GM12878 (cell line): ENCODE measurements at regions of chr11 and their contacts with region 1.

Region 1: DNA sequence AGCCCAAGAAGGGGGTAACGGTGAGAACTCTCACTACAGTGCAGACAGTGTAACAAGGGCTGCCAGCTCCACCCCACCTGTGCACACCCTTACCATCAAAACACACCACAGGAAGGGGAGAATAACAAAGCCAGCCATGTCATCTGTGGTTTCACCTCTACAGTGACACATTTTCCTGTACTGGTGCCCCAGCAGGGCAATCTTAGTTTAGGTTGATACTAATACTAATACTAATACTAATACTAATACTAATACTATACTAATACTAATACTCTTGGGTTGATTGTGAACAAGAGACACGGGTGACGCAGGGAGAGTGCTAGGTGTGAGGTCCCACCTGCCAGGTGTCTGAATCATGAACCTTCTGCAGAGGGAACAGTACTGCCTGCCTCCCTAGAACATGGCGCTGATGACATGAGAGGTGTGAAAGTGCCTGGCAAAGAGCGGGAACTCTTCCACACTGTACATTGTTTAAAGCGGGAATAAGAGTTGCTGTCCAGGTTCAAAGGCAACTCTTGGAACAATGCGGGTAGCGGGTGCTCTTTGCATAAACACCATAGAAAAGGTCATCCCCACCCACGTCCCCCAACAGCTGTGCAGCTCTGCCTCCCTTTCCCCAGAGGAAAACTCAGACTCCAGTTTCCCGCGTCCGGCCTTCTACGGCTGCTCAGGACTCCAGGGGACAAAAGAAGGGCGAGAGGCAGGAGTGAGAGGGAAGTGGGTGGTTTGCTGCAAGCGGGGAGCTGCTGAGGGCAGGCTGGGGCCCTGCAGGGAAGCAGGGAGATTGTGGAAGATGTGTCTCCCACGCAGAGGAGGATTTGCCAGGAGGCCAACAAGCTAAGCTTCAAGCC is 25.0 kb upstream of the TMPRSS4 start:
- DNase-seq: peak; percentile 23
- ATAC-seq: peak; percentile 81
- H3K4me3 ChIP-seq: no peak overlapping the region
- H3K27ac ChIP-seq: no peak overlapping the region
- H3K4me1 ChIP-seq: peaks cover 18% of the 10 kb centered on the region
- H3K27me3 ChIP-seq: no peaks in the 10 kb centered on the region
- CTCF ChIP-seq: no peak
- EP300 ChIP-seq: peak; percentile 14 to 42; a peak in 2 of 4 replicates
- POLR2A ChIP-seq: no peak
- RAD21 ChIP-seq: no peak

Region 2: DNA sequence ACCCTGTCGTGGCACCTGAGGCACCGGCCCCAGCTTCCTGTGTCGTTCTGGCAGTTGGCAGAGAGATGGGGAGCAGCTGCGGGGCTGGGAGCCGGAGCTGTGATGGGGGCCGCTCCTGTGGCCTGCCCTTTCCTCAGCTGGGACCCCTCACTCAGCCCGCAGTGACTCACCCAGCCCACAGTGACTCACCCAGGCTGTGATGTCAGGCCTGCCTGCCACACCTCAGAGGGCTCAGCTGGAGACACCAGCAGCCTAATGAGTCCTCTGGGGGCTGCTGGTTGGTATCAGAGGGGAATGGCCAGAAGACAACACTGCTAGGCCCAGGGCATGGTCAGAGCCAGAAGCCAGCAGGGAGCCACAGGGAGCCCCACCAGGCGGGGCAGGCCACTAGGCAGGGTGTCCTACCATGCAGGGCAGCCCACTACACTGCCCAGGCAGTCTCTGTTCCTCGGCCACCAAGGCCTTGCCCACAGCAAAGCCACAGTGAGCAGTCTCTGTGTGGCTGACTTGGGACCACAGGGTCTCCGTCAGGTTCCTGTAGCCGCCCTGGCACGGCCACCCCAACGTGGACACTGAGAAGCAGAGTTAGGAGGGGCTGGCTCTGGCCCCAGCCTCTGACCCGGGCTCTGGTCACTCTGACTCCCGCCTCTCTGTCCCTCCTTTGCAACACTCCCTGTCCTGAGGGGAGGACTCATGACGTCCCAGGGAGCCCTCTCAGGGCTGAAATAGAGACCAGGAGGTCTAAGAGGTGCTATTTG is 223.0 kb before region 1 on chr11:
- CTCF ChIA-PET with region 1: interaction called, 257 read pairs
- POLR2A ChIA-PET with region 1: interaction called, 3 read pairs
- RAD21 ChIA-PET with region 1: interaction called, 183 read pairs
- SMC1A ChIA-PET with region 1: interaction called, 98 read pairs
- in situ Hi-C with region 1: no loop called
- intact Hi-C with region 1: loop called (anchors 1 kb)
- DNase-seq: no peak
- ATAC-seq: peak; percentile 92
- H3K4me3 ChIP-seq: no peak overlapping the region
- H3K27ac ChIP-seq: no peak overlapping the region; the same call in 1 of the 2 replicates
- H3K4me1 ChIP-seq: peaks cover 14% of the 10 kb centered on the region
- H3K27me3 ChIP-seq: no peaks in the 10 kb centered on the region
- CTCF ChIP-seq: no peak
- EP300 ChIP-seq: peak; percentile 34 to 54; a peak in 2 of 4 replicates
- POLR2A ChIP-seq: 0 out of 2 replicates have a peak, but pooled peaks have one; percentile 19
- RAD21 ChIP-seq: no peak

Region 3: DNA sequence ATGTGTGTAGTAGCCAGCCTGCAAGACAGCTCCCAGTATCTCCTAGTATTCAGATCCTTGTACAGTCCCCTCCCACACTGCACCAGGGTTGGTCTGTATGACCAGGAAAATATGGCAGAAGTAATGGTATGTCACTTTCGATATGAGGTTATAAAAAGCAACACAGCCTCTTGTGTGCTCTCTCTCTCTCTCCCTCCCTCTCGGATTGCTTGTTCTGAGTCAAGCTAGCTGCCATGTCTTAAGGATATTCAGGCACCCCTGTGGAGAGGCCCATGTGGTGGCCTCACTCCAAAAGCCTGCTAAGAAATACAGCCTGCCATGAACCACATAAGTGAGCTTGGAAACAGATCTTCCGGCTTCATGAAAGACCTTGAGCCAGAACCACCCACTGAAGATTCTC is 200.7 kb before region 1 on chr11:
- CTCF ChIA-PET with region 1: interaction called, 21 read pairs
- POLR2A ChIA-PET with region 1: no interaction called
- RAD21 ChIA-PET with region 1: interaction called, 93 read pairs
- SMC1A ChIA-PET with region 1: interaction called, 95 read pairs
- in situ Hi-C with region 1: no loop called
- intact Hi-C with region 1: no loop called
- DNase-seq: no peak
- ATAC-seq: peak; percentile 14; the same call in 2 of the 3 replicates
- H3K4me3 ChIP-seq: no peak overlapping the region
- H3K27ac ChIP-seq: no peak overlapping the region
- H3K4me1 ChIP-seq: no peaks in the 10 kb centered on the region
- H3K27me3 ChIP-seq: no peaks in the 10 kb centered on the region; a peak in 2 of 4 replicates
- CTCF ChIP-seq: no peak
- EP300 ChIP-seq: no peak
- POLR2A ChIP-seq: no peak
- RAD21 ChIP-seq: no peak

Region 4: GRCh38 chr11:117941163-117941707 is 110.6 kb before region 1 on chr11:
- CTCF ChIA-PET with region 1: interaction called, 364 read pairs
- POLR2A ChIA-PET with region 1: no interaction called
- RAD21 ChIA-PET with region 1: interaction called, 248 read pairs
- SMC1A ChIA-PET with region 1: interaction called, 295 read pairs
- in situ Hi-C with region 1: loop called (anchors 5 kb)
- intact Hi-C with region 1: no loop called
- DNase-seq: no peak
- ATAC-seq: no peak
- H3K4me3 ChIP-seq: no peak overlapping the region
- H3K27ac ChIP-seq: no peak overlapping the region
- H3K4me1 ChIP-seq: peaks cover 24% of the 10 kb centered on the region
- H3K27me3 ChIP-seq: no peaks in the 10 kb centered on the region
- CTCF ChIP-seq: no peak
- EP300 ChIP-seq: no peak
- POLR2A ChIP-seq: no peak
- RAD21 ChIP-seq: no peak

Region 5: GRCh38 chr11:118002541-118003423 is 49.1 kb before region 1 on chr11:
- CTCF ChIA-PET with region 1: interaction called, 10 read pairs
- POLR2A ChIA-PET with region 1: interaction called, 8 read pairs
- RAD21 ChIA-PET with region 1: interaction called, 8 read pairs
- SMC1A ChIA-PET with region 1: interaction called, 27 read pairs
- in situ Hi-C with region 1: no loop called
- intact Hi-C with region 1: no loop called
- DNase-seq: no peak
- ATAC-seq: peak; percentile 6; the same call in 2 of the 3 replicates
- H3K4me3 ChIP-seq: no peak overlapping the region
- H3K27ac ChIP-seq: peak overlapping the region; percentile 38
- H3K4me1 ChIP-seq: peaks cover 70% of the 10 kb centered on the region
- H3K27me3 ChIP-seq: no peaks in the 10 kb centered on the region
- CTCF ChIP-seq: no peak
- EP300 ChIP-seq: no peak
- POLR2A ChIP-seq: no peak
- RAD21 ChIP-seq: no peak

Region 6: GRCh38 chr11:118033443-118033842 is 18.4 kb before region 1 on chr11:
- CTCF ChIA-PET with region 1: interaction called, 13 read pairs
- POLR2A ChIA-PET with region 1: interaction called, 6 read pairs
- RAD21 ChIA-PET with region 1: interaction called, 5 read pairs
- SMC1A ChIA-PET with region 1: interaction called, 7 read pairs
- in situ Hi-C with region 1: no loop called
- intact Hi-C with region 1: no loop called
- DNase-seq: no peak
- ATAC-seq: peak; percentile 97
- H3K4me3 ChIP-seq: no peak overlapping the region
- H3K27ac ChIP-seq: no peak overlapping the region
- H3K4me1 ChIP-seq: peaks cover 12% of the 10 kb centered on the region
- H3K27me3 ChIP-seq: no peaks in the 10 kb centered on the region
- CTCF ChIP-seq: no peak
- EP300 ChIP-seq: peak in 1 of 2 experiments; percentile 50; a peak in 1 of 4 replicates
- POLR2A ChIP-seq: no peak
- RAD21 ChIP-seq: no peak

Region 7: GRCh38 chr11:118145285-118146227 is 93.7 kb after region 1 on chr11:
- CTCF ChIA-PET with region 1: no interaction called
- POLR2A ChIA-PET with region 1: no interaction called
- RAD21 ChIA-PET with region 1: no interaction called
- SMC1A ChIA-PET with region 1: no interaction called
- in situ Hi-C with region 1: no loop called
- intact Hi-C with region 1: no loop called
- DNase-seq: peak; percentile 35
- ATAC-seq: peak; percentile 96
- H3K4me3 ChIP-seq: peak overlapping the region; percentile 73
- H3K27ac ChIP-seq: no peak overlapping the region
- H3K4me1 ChIP-seq: no peaks in the 10 kb centered on the region
- H3K27me3 ChIP-seq: peaks cover 5 to 10% of the 10 kb centered on the region in 2 experiments
- CTCF ChIP-seq: peak; percentile 82 to 90 (median 86)
- EP300 ChIP-seq: no peak
- POLR2A ChIP-seq: no peak
- RAD21 ChIP-seq: peak; percentile 83